ENCODE measurements at regions of chr22 and their contacts with region 1.

Region 1: GRCh38 chr22:35350539-35351503 is 30.1 kb upstream of the HMOX1 start:
- DNase-seq: peak; percentile 90 to 93 (median 91)
- H3K4me3 ChIP-seq: peak overlapping the region; percentile 39 to 73 (median 52)
- H3K4me3 Mint-ChIP-seq: peak overlapping the region; percentile 85 to 91
- H3K27ac ChIP-seq: peak overlapping the region; percentile 65 to 90
- H3K27ac Mint-ChIP-seq: peak overlapping the region; percentile 80 to 98 (median 97)
- H3K4me1 ChIP-seq: peaks cover 53 to 57% of the 10 kb centered on the region in 2 donors
- H3K4me1 Mint-ChIP-seq: peaks cover 64% of the 10 kb centered on the region
- H3K27me3 ChIP-seq: no peaks in the 10 kb centered on the region
- H3K27me3 Mint-ChIP-seq: peaks cover 0 to 2% (median 0%) of the 10 kb centered on the region in 3 donors
- CTCF ChIP-seq: peak; percentile 91

Region 2: GRCh38 chr22:35337932-35338331 is 12.9 kb before region 1 on chr22:
- intact Hi-C with region 1: no loop called
- DNase-seq: no peak
- H3K4me3 ChIP-seq: no peak overlapping the region
- H3K4me3 Mint-ChIP-seq: no peak overlapping the region
- H3K27ac ChIP-seq: no peak overlapping the region
- H3K27ac Mint-ChIP-seq: peak overlapping the region in 5 of 7 donors; percentile 44 to 84 (median 50)
- H3K4me1 ChIP-seq: peaks cover 3% of the 10 kb centered on the region in 2 donors
- H3K4me1 Mint-ChIP-seq: peaks cover 12% of the 10 kb centered on the region
- H3K27me3 ChIP-seq: no peaks in the 10 kb centered on the region
- H3K27me3 Mint-ChIP-seq: peaks cover 0 to 5% (median 3%) of the 10 kb centered on the region in 3 donors
- CTCF ChIP-seq: peak; percentile 8

Region 3: DNA sequence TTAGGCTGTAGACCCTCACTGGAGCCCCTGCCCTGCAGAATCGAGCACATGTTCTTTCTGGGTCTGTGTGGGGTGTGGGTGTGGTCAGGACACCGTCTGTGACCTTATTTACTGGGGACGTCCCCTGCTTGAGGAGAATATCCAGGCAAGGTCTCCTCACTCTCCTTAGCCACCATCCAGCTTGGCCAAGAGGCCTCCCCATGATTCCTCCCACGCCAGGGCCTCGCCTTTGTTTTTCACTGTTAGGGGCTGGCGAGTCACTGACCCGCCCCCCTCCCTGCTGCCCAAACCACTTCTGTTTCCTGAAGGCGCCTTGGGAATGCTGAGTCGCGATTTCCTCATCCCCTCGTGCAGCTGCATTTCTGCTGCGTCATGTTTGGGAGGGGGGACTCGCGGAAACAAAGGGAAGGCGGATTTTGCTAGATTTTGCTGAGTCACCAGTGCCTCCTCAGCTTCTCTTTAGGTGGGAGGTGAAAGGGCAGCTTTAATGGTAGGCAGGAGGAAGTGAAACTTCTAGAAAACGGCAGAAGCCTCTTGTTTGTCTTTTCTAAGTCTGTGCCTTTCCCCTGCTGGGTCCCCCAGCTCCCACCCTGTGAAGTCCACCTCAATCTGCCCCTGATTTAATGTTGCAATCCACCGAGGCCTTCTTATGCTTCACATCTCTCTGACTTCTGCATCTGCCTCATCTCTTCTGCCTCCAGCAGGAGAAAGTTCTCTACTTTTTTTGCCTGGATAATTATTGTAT is 26.1 kb after region 1 on chr22:
- intact Hi-C with region 1: loop called (anchors 1 to 5 kb)
- DNase-seq: peak; percentile 98 to 100 (median 100)
- H3K4me3 ChIP-seq: peak overlapping the region in 1 of 3 experiments; percentile 66
- H3K4me3 Mint-ChIP-seq: peak overlapping the region; percentile 47 to 86
- H3K27ac ChIP-seq: peak overlapping the region; percentile 74 to 84
- H3K27ac Mint-ChIP-seq: peak overlapping the region; percentile 92 to 97 (median 96)
- H3K4me1 ChIP-seq: peaks cover 74 to 85% of the 10 kb centered on the region in 2 donors
- H3K4me1 Mint-ChIP-seq: peaks cover 68% of the 10 kb centered on the region
- H3K27me3 ChIP-seq: no peaks in the 10 kb centered on the region
- H3K27me3 Mint-ChIP-seq: peaks cover 0 to 3% (median under 1%) of the 10 kb centered on the region in 3 donors
- CTCF ChIP-seq: no peak

Region 4: DNA sequence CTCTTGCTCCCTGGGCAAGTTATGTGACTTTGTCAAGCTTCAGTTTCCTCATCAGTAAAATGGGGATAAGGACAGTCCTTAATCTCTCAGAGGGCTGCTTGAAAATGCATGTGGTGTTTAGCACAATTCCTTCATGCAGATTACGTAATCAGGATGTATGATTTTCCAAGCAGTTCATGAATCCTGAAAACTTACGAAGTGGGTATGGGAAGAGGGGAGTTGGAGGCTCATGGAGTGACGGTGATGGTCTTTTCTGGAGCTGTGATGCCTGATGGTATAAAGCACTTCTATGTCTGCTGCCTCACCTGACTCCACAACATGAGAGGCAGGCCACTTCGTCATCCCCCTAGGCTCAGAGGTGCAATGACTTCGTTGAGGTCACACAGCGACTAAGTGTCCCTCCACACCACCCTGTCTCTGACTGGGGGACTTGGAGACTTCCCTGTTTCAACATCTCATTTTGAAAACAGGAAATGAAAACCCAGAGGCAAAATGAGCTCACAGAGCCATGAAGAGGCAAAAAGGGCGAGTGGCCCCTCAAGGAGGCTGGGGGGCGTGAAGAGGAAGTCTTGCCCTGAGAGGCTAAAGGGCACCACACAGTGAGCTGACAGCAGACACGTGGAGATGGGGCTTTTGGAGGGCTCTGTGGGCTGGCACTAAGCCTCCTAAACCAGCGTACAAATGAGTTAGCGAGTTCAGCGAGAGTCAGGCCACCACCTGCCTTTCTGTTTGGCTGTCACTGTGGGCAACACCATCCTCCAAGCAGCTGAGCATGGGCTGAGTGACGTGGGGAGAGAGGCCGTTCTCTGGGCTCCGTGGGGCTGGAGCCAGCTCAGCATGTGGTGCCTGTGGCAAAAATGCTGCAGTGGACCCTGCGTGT is 59.2 kb after region 1 on chr22:
- intact Hi-C with region 1: loop called (anchors 1 to 5 kb)
- DNase-seq: peak; percentile 94 to 98 (median 97)
- H3K4me3 ChIP-seq: peak overlapping the region in 1 of 3 experiments; percentile 49
- H3K4me3 Mint-ChIP-seq: peak overlapping the region; percentile 45 to 67
- H3K27ac ChIP-seq: peak overlapping the region; percentile 92
- H3K27ac Mint-ChIP-seq: peak overlapping the region; percentile 97 to 100 (median 98)
- H3K4me1 ChIP-seq: peaks cover 53 to 54% of the 10 kb centered on the region in 2 donors
- H3K4me1 Mint-ChIP-seq: peaks cover 56% of the 10 kb centered on the region
- H3K27me3 ChIP-seq: no peaks in the 10 kb centered on the region
- H3K27me3 Mint-ChIP-seq: peaks cover 0 to 2% (median 0%) of the 10 kb centered on the region in 3 donors
- CTCF ChIP-seq: no peak

Region 5: GRCh38 chr22:35467681-35468434 is 117.0 kb after region 1 on chr22:
- intact Hi-C with region 1: no loop called
- DNase-seq: no peak
- H3K4me3 ChIP-seq: no peak overlapping the region
- H3K4me3 Mint-ChIP-seq: no peak overlapping the region
- H3K27ac ChIP-seq: no peak overlapping the region
- H3K27ac Mint-ChIP-seq: peak overlapping the region in 1 of 7 donors; percentile 14
- H3K4me1 ChIP-seq: no peaks in the 10 kb centered on the region
- H3K4me1 Mint-ChIP-seq: peaks cover 2% of the 10 kb centered on the region
- H3K27me3 ChIP-seq: no peaks in the 10 kb centered on the region
- H3K27me3 Mint-ChIP-seq: peaks cover 2 to 10% (median 10%) of the 10 kb centered on the region in 3 donors
- CTCF ChIP-seq: no peak

Region 6: GRCh38 chr22:35582861-35583670 is 232.2 kb after region 1 on chr22:
- intact Hi-C with region 1: loop called (anchors 5 kb)
- DNase-seq: peak; percentile 43 to 66 (median 55)
- H3K4me3 ChIP-seq: no peak overlapping the region
- H3K4me3 Mint-ChIP-seq: no peak overlapping the region
- H3K27ac ChIP-seq: no peak overlapping the region
- H3K27ac Mint-ChIP-seq: peak overlapping the region in 1 of 7 donors; percentile 69
- H3K4me1 ChIP-seq: no peaks in the 10 kb centered on the region
- H3K4me1 Mint-ChIP-seq: peaks cover 3% of the 10 kb centered on the region
- H3K27me3 ChIP-seq: no peaks in the 10 kb centered on the region
- H3K27me3 Mint-ChIP-seq: peaks cover 4 to 12% (median 7%) of the 10 kb centered on the region in 3 donors
- CTCF ChIP-seq: peak; percentile 99

Region 7: DNA sequence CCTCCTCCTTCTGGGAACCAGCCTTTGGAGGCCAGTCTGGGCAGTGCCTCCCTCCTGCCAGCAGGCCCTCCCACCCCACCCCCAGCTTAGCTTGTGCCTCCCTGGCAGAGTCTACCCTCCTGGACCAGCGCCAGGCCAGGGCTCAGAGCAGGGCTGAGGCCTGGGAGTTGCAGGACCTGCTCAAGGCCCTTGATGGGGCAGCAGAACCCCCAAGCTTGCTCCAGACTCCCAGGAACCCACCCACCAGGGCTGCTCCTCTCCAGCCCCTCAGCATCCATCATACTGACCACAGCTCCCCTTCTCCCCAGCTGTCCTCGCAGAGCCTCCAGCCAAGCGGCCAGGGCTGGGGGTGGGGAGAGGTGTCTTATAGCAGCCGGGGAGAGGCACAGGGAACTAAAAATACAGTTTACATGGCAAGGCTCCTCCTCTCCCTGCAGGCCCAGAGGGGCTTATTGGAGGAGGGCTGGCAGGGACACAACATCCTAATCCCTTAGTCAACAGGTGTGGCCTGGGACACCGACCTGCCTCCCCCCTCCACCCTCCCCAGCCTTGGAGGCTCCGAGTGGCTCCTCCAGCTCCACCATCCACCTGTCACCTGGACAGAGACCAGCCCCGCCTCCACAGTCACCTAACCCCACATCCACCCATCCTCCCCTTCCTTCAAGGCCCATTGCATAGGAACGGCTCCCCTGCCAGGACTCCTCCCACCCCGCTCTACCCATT is 271.5 kb after region 1 on chr22:
- intact Hi-C with region 1: loop called in 1 of 2 experiments (anchors 5 kb)
- DNase-seq: no peak
- H3K4me3 ChIP-seq: no peak overlapping the region
- H3K4me3 Mint-ChIP-seq: no peak overlapping the region
- H3K27ac ChIP-seq: no peak overlapping the region
- H3K27ac Mint-ChIP-seq: no peak overlapping the region
- H3K4me1 ChIP-seq: peaks cover 5 to 6% of the 10 kb centered on the region in 2 donors
- H3K4me1 Mint-ChIP-seq: peaks cover 8% of the 10 kb centered on the region
- H3K27me3 ChIP-seq: peaks cover 0 to 10% of the 10 kb centered on the region in 2 donors
- H3K27me3 Mint-ChIP-seq: peaks cover 4 to 19% (median 15%) of the 10 kb centered on the region in 3 donors
- CTCF ChIP-seq: no peak

Measured in CD14-positive monocyte (primary cell).